Activated B cell treated with CpG ODN at 0.5 μM for 24 hours (primary cell): ENCODE measurements at regions of chr3 and their contacts with region 1.

Region 1: DNA sequence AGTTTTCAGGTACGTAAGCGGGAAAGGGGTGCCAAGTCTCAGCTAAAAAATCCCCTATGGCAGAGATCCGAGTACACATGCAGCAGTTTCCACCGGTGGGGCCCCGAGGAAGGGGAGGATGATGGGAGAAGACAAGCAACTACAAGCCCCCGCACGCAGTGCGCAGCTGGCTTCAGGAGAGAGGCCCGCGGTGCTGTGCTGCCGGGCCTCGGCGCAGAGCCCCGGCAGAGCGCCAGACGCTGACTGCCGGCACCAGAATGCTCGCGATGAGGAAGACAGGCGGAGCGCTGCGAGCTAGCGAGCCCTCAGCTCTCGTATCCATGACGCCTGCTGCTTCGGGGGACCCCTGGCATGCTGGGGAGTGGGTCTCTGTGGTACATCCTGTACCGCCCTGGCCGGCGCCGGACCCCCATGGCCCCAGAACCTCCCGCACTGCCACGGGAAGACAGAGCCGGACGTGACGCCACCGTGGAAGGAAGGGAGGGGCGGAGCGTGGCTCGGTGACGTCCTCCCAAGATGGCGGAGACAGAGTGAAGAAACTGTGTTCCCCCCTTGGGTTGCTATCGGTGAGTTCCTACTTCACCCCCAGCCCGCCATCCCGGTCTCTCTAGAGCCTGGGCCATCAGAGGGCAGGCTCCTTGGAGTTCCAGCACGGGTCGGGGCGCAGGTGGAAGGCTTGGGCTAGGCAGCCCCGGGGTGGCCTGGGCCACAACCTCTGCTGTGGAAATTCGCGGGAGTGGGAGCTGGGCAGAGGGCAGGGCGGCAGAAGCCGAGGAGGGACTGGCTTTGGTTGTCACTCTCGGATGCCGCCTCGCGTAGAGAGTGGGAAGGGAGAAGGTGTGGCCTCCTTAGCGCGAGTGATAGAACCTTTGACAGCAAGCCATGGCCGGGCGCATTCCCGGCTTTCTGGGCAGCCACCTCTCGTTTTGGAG is at the start of gene MYNN:
- DNase-seq: peak; percentile 91
- ATAC-seq: peak; percentile 77
- H3K4me3 Mint-ChIP-seq: peak within 1 kb of the TSS; percentile 99
- H3K27ac Mint-ChIP-seq: peak within 1 kb of the TSS; percentile 99
- H3K4me1 Mint-ChIP-seq: peaks cover 50% of the 10 kb centered on the region
- H3K27me3 Mint-ChIP-seq: no peaks in the 10 kb centered on the region
- CTCF ChIP-seq: no peak
- total RNA-seq, gene MYNN: 23.9 and 24.8 TPM in 2 replicates

Region 2: DNA sequence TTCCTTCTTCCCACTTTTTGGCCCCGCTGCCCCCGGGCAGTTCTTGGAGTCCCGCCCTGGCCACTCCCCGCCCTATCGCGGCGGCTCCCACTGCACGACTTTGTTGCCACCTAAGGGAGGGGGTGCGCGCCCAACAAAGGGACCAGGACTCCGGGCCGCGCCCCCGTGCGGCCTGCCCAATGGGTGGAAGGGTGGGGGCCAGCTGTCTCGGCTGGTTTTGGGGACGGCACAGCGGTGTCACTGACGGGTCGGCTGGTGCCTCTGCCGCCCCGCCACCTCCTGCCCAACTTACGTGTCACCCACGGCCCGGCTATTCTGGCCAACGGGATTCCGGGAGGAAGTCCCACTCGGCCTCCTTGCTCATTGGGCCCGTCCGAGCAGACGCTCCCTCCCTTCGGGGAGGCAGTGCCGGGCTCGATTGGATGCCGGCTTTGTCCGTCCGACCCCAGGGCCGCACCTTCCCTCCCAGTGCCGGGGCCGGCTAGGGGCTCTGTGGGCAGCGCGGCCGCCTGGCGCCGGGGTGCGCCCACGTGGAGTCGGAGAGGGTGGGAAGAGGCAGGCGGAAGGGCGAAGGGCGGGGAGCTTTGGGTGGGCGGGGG is 1677.5 kb before region 1 on chr3 and contains the start of gene GOLIM4:
- CTCF ChIA-PET with region 1: no interaction called
- POLR2A ChIA-PET with region 1: no interaction called
- intact Hi-C with region 1: loop called (anchors 2 kb)
- DNase-seq: peak; percentile 82
- ATAC-seq: peak; percentile 85
- H3K4me3 Mint-ChIP-seq: peak within 1 kb of the TSS; percentile 85
- H3K27ac Mint-ChIP-seq: peak within 1 kb of the TSS; percentile 83
- H3K4me1 Mint-ChIP-seq: peaks cover 25% of the 10 kb centered on the region
- H3K27me3 Mint-ChIP-seq: peaks cover 2% of the 10 kb centered on the region
- CTCF ChIP-seq: no peak
- total RNA-seq, gene GOLIM4: 8.0 and 8.5 TPM in 2 replicates

Region 3: DNA sequence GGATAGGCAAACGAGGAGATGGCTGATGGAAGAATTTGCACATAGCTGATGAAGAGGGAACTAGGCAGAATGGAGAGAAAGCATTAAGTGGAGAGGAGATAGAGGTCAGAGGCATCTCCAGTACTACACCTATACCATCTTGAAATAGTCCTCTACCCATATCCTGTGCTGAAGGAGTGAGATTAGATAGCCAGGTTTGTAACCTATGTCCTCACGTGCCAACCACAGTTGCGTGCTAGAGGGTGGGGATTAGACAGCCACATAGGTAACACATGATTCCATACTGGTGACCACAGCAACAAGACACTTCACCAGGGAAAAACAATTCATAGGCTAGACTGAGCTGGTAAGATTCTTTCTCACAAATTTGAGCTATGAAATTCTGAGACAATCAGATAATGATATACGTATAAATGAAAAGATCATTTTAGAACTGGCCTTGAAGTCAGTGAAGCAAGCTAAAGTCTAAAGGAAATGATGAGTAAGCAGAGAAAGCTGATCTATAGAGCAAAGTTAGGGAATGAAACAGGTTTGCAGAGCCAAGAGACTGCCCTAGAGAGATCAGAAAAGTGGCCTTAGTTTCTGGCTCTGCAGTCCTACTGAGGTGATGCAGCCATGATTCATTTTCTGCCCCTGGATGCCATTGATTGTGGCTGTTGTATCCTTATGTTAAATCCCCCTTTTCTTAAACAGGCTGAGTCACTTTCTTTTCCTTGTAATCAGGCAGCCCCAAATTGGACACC is 17.7 kb after region 1 on chr3:
- CTCF ChIA-PET with region 1: no interaction called
- POLR2A ChIA-PET with region 1: no interaction called
- intact Hi-C with region 1: loop called (anchors 2 kb)
- DNase-seq: no peak
- ATAC-seq: no peak
- H3K4me3 Mint-ChIP-seq: no peak overlapping the region
- H3K27ac Mint-ChIP-seq: no peak overlapping the region
- H3K4me1 Mint-ChIP-seq: peaks cover 3% of the 10 kb centered on the region
- H3K27me3 Mint-ChIP-seq: no peaks in the 10 kb centered on the region
- CTCF ChIP-seq: no peak

Region 4: GRCh38 chr3:169836078-169836941 is 63.1 kb after region 1 on chr3:
- CTCF ChIA-PET with region 1: no interaction called
- POLR2A ChIA-PET with region 1: interaction called, 19 read pairs
- intact Hi-C with region 1: loop called (anchors 2 kb)
- DNase-seq: no peak
- ATAC-seq: peak; percentile 93
- H3K4me3 Mint-ChIP-seq: peak overlapping the region; percentile 44
- H3K27ac Mint-ChIP-seq: peak overlapping the region; percentile 97
- H3K4me1 Mint-ChIP-seq: peaks cover 38% of the 10 kb centered on the region
- H3K27me3 Mint-ChIP-seq: no peaks in the 10 kb centered on the region
- CTCF ChIP-seq: no peak

Region 5: DNA sequence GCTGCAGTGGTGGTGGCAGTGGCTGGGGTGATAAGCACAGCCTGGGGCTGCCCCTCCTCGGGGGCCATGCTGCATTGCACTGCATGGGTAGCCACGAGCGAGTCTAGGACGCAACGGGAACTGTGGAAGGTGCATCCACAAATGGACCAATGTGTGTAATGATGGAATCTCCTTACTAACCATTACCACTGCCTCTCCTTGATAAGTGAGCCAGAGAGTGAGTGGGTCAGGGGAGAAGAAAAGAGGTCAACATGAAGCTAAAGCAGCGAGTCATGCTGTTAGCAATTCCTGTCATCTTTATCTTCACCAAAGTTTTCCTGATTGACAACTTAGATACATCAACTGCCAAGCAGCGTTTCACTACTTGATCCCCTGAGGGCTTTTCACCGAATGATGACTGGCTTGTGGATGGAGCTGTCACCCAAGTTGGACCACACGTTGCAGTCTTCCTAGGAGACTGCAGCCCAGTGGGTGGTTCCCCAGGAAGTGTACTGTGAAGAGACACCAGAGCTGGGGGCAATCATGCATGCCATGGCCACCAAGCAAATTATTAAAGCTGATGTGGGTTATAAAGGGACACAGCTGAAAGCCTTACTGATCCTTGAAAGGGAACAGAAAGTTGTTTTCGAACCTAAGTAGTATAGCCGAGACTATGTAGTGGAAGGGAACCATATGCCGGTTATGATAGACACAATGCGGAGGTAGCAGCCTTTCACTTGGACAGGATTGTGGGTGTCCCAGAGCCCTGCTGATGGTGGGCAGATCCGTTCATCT is 158.8 kb after region 1 on chr3:
- CTCF ChIA-PET with region 1: no interaction called
- POLR2A ChIA-PET with region 1: interaction called, 11 read pairs
- intact Hi-C with region 1: no loop called
- DNase-seq: peak; percentile 55
- ATAC-seq: peak; percentile 88
- H3K4me3 Mint-ChIP-seq: peak overlapping the region; percentile 70
- H3K27ac Mint-ChIP-seq: peak overlapping the region; percentile 95
- H3K4me1 Mint-ChIP-seq: peaks cover 52% of the 10 kb centered on the region
- H3K27me3 Mint-ChIP-seq: no peaks in the 10 kb centered on the region
- CTCF ChIP-seq: no peak

Region 6: DNA sequence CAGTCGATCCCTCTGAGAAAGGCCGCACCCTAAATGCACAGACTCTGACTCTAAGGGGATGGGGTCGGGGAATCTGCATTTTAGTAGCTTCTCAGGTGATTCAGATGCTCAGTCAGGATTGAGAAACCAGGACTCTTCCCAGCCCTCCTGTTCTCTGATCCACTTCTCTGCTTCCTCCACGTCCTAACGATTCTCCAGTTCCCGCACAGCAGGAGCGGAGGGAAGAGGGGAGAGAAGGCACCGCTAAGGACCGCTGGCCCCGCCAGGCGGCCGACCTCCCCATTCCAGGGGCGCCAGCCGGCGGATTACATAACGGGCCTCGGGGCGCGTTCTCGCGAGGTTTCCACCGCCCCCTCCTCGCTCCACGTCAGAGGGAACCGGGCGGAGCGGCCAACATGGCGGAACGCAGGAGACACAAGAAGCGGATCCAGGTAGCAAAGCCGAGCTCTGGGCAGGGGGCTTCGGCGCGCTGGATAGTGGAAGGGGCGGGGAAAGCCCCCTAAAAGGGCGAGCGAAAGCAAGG is 193.3 kb after region 1 on chr3 and contains the start of gene SEC62:
- CTCF ChIA-PET with region 1: no interaction called
- POLR2A ChIA-PET with region 1: interaction called, 35 read pairs
- intact Hi-C with region 1: loop called (anchors 1 kb)
- DNase-seq: peak; percentile 94
- ATAC-seq: peak; percentile 86
- H3K4me3 Mint-ChIP-seq: peak within 1 kb of the TSS; percentile 99
- H3K27ac Mint-ChIP-seq: peak within 1 kb of the TSS; percentile 99
- H3K4me1 Mint-ChIP-seq: peaks cover 87% of the 10 kb centered on the region
- H3K27me3 Mint-ChIP-seq: no peaks in the 10 kb centered on the region
- CTCF ChIP-seq: no peak
- total RNA-seq, gene SEC62: 140 and 165 TPM in 2 replicates

Region 7: DNA sequence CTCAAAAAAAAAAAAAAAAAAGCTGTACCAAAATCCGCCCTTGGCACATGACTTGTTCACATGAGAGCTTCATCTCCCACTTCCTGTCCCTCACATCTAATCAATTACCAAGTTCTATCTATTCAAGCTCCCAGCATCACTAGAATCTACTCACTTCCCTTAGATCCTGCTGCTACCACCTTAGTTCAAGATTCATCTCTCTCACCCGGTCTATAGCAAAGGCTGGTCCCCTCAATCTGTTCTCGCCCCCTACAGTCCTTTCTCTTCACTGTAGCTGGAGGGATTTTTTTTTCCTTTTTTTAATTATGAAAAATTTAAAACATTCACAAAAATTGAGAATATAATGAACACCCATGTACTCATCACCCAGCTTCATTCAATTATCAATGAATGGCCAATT is 247.9 kb after region 1 on chr3:
- CTCF ChIA-PET with region 1: no interaction called
- POLR2A ChIA-PET with region 1: no interaction called
- intact Hi-C with region 1: no loop called
- DNase-seq: no peak
- ATAC-seq: peak; percentile 70
- H3K4me3 Mint-ChIP-seq: no peak overlapping the region
- H3K27ac Mint-ChIP-seq: no peak overlapping the region
- H3K4me1 Mint-ChIP-seq: peaks cover 5% of the 10 kb centered on the region
- H3K27me3 Mint-ChIP-seq: peaks cover 4% of the 10 kb centered on the region
- CTCF ChIP-seq: no peak

Region 8: GRCh38 chr3:170055209-170055608 is 282.0 kb after region 1 on chr3:
- CTCF ChIA-PET with region 1: no interaction called
- POLR2A ChIA-PET with region 1: interaction called, 7 read pairs
- intact Hi-C with region 1: loop called (anchors 2 kb)
- DNase-seq: no peak
- ATAC-seq: peak; percentile 75
- H3K4me3 Mint-ChIP-seq: peak overlapping the region; percentile 77
- H3K27ac Mint-ChIP-seq: peak overlapping the region; percentile 87
- H3K4me1 Mint-ChIP-seq: peaks cover 57% of the 10 kb centered on the region
- H3K27me3 Mint-ChIP-seq: no peaks in the 10 kb centered on the region
- CTCF ChIP-seq: no peak